Activated CD4-positive, alpha-beta T cell treated with anti-CD3 and anti-CD28 coated beads for 36 hours (primary cell): ENCODE measurements at regions of chr10 and their contacts with region 1.

Region 1: DNA sequence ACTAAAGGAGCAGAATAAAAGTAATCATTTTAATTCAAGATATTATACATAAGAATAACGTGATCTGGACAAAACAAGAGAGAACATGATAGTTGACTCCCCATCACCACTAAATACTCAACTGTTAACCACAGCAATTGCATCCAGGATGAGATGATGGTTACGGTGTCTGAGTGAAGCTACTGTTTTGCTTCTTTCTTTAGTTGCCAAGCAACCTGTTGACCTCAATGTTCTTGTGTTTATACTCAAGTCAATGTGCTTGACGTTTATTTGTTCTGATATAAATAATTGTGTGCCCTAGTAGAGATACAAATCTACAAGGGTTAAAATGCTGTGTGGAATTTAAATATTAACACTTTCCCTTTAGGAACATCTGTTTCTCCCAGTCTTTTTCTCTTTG is 31.4 kb upstream of the MPP7 start:
- DNase-seq: peak; percentile 43
- ATAC-seq: peak; percentile 62
- H3K4me3 Mint-ChIP-seq: peak overlapping the region; percentile 79
- H3K27ac Mint-ChIP-seq: peak overlapping the region; percentile 100
- H3K4me1 Mint-ChIP-seq: peaks cover 70% of the 10 kb centered on the region
- H3K27me3 Mint-ChIP-seq: no peaks in the 10 kb centered on the region

Region 2: DNA sequence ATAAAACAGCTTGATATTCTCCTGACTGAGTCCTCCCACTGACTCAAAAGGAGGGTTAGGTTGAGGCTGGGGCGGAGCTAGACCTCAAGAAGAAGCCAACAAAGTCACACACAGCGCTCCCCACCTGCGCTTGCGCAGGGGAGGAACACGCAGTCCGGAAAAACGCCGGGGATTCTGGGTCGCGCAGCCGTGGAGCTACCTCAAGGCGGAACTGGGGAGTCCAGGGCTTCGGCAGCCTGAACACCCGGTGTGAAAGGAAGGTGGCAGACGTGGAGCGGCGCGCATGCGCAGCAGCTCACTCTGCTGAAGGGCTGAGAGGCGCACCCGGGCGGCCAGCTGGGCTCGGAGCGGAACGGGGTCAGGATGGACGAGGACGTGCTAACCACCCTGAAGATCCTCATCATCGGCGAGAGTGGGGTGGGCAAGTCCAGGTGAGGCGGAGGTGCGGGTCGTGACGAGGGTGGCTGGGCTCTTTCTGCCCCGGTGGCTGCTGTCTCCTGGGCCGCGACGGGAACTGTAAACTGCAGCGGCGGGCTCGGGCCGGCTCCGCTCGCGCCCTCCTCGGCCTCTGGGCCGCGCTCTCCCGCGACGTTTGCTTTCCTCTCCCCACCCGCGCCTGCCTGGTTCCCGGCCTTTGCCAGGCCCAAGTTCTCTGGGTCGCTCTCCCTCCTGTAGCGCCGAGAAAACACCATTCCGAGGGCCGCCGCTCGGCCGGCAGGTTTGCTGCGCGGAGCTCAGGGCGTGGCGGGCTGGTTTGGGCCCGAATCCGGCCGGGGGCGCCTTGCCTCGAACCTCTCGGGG is 830.1 kb before region 1 on chr10 and contains the start of gene RAB18:
- CTCF ChIA-PET with region 1: no interaction called
- POLR2A ChIA-PET with region 1: no interaction called
- intact Hi-C with region 1: loop called in 1 of 2 experiments (anchors 2 kb)
- DNase-seq: peak; percentile 99
- ATAC-seq: peak; percentile 98
- H3K4me3 Mint-ChIP-seq: peak within 1 kb of the TSS; percentile 93
- H3K27ac Mint-ChIP-seq: peak within 1 kb of the TSS; percentile 93
- H3K4me1 Mint-ChIP-seq: peaks cover 46% of the 10 kb centered on the region
- H3K27me3 Mint-ChIP-seq: no peaks in the 10 kb centered on the region
- total RNA-seq, gene RAB18: 44.6 to 49.3 TPM

Region 3: GRCh38 chr10:28302638-28303488 is 31.4 kb before region 1 on chr10 and contains the start of gene MPP7:
- CTCF ChIA-PET with region 1: interaction called, 114 read pairs
- POLR2A ChIA-PET with region 1: interaction called, 21 read pairs
- intact Hi-C with region 1: loop called (anchors 1 kb)
- DNase-seq: peak; percentile 97
- ATAC-seq: peak; percentile 97
- H3K4me3 Mint-ChIP-seq: peak within 1 kb of the TSS; percentile 90
- H3K27ac Mint-ChIP-seq: peak within 1 kb of the TSS; percentile 80
- H3K4me1 Mint-ChIP-seq: peaks cover 49% of the 10 kb centered on the region
- H3K27me3 Mint-ChIP-seq: no peaks in the 10 kb centered on the region
- total RNA-seq, gene MPP7: 10.9 to 11.0 TPM

Region 4: GRCh38 chr10:28410420-28411135 is 76.3 kb after region 1 on chr10:
- CTCF ChIA-PET with region 1: no interaction called
- POLR2A ChIA-PET with region 1: interaction called, 6 read pairs
- intact Hi-C with region 1: loop called (anchors 2 kb)
- DNase-seq: no peak
- ATAC-seq: no peak
- H3K4me3 Mint-ChIP-seq: no peak overlapping the region
- H3K27ac Mint-ChIP-seq: no peak overlapping the region
- H3K4me1 Mint-ChIP-seq: peaks cover 13% of the 10 kb centered on the region
- H3K27me3 Mint-ChIP-seq: peaks cover 15% of the 10 kb centered on the region

Region 5: DNA sequence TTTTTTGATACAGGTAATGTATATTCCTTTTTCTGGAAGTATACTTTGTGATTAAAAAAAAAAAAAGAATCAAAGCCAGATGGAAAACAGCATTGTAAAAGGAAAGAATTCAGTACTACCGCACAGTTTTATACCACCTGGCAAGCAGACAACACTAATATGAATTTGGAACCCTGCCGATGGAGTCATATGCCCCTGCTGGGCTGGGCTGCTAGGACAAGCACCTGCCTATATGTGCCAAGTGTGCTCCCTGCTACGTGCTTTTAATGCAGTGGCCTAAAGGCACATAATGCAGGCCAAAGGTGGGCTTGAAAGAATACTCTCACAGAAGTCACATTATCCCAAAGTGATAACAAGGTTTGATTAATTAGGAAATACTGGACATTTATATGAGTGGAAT is 168.8 kb after region 1 on chr10:
- CTCF ChIA-PET with region 1: no interaction called
- POLR2A ChIA-PET with region 1: no interaction called
- intact Hi-C with region 1: no loop called
- DNase-seq: peak; percentile 8
- ATAC-seq: no peak
- H3K4me3 Mint-ChIP-seq: no peak overlapping the region
- H3K27ac Mint-ChIP-seq: no peak overlapping the region
- H3K4me1 Mint-ChIP-seq: no peaks in the 10 kb centered on the region
- H3K27me3 Mint-ChIP-seq: no peaks in the 10 kb centered on the region

Region 6: GRCh38 chr10:28595613-28596012 is 261.3 kb after region 1 on chr10:
- CTCF ChIA-PET with region 1: no interaction called
- POLR2A ChIA-PET with region 1: no interaction called
- intact Hi-C with region 1: no loop called
- DNase-seq: no peak
- ATAC-seq: no peak
- H3K4me3 Mint-ChIP-seq: no peak overlapping the region
- H3K27ac Mint-ChIP-seq: no peak overlapping the region
- H3K4me1 Mint-ChIP-seq: peaks cover 67% of the 10 kb centered on the region
- H3K27me3 Mint-ChIP-seq: no peaks in the 10 kb centered on the region